CD4-positive, alpha-beta memory T cell (primary cell): ENCODE measurements at regions of chr16 and their contacts with region 1.

Region 1: DNA sequence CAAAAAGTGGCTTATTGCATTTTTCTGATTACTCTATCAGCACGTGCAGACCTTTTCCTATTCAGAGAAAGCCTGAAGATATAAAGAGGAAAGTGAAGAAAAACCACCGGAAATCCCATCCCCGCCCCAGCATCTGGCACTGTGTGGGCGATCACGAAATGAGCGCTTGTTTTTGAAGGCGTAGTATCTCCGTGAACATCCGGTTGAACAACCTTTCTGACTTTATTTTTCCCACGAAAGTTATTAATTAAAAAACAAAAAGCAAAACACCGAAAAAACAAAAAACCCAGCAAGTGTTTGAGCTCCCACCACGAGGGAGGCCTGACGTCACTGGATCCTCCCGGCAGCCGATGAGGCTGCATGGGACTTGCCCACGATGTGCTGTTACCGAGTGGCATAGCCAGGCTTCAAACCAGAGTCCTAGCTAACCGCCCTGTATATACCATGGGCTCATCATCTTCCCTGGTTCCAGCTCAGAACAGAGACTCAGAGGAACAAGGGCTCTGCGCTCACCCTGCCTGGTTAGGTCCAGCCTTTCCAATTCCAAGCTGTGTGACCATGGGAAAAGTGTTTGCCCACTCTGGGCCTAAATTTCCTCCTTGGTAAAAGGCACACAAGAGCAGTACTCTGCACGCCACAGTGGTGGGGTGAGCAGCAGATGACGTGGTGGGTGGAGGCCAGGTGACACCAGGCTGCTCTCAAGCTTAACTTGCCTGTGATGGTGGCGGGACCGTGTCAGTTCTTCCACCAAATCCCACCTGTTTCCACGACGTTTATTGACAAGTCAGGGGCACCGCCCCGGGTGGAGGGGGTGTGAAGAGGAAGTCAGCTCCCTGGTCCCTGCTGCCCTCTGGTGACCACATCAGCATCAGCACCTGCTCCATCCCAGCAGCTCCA is 34.3 kb upstream of the IL21R start:
- DNase-seq: peak; percentile 91 to 98 (median 93)
- H3K4me3 ChIP-seq: peak overlapping the region in 1 of 2 donors; percentile 36
- H3K4me3 Mint-ChIP-seq: peak overlapping the region in 7 of 8 donors; percentile 37 to 81 (median 70)
- H3K27ac ChIP-seq: peak overlapping the region; percentile 96
- H3K27ac Mint-ChIP-seq: peak overlapping the region; percentile 99 to 100 (median 99)
- H3K4me1 ChIP-seq: peaks cover 65% of the 10 kb centered on the region
- H3K4me1 Mint-ChIP-seq: peaks cover 32 to 65% (median 44%) of the 10 kb centered on the region in 4 donors
- H3K27me3 ChIP-seq: no peaks in the 10 kb centered on the region
- H3K27me3 Mint-ChIP-seq: no peaks in the 10 kb centered on the region

Region 2: GRCh38 chr16:26863931-26864330 is 503.8 kb before region 1 on chr16:
- CTCF ChIA-PET with region 1: no interaction called
- POLR2A ChIA-PET with region 1: no interaction called
- intact Hi-C with region 1: no loop called
- DNase-seq: no peak
- H3K4me3 ChIP-seq: no peak overlapping the region
- H3K4me3 Mint-ChIP-seq: no peak overlapping the region
- H3K27ac ChIP-seq: no peak overlapping the region
- H3K27ac Mint-ChIP-seq: no peak overlapping the region
- H3K4me1 ChIP-seq: no peaks in the 10 kb centered on the region
- H3K4me1 Mint-ChIP-seq: no peaks in the 10 kb centered on the region
- H3K27me3 ChIP-seq: no peaks in the 10 kb centered on the region
- H3K27me3 Mint-ChIP-seq: peaks cover 10 to 13% of the 10 kb centered on the region in 2 donors

Region 3: DNA sequence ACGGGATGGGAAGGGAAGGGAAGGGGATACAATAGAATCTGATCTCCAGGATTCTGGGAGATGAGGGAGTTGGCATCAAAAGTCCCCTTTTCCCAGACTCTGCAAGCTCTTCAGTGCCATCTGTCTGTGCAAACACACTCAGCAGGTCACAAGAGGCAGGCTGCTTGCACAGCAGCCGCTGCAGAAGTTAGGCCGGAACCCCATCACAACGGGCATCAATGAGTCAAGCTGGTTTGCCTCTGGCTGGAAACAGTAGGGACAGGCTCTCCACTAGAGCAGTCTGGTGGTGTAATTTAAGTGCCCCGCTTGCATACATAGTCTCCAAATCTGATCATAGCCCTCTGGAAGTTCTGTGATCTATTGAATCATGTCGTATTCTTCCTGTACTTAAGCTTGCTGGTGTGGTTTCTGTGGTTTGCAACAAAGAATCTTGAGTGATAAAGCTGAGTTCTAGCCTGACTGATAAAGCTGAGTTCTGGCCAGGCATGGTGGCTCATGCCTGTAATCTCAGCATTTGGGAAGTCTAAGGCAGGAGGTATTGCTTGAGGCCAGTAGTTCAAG is 198.1 kb before region 1 on chr16:
- CTCF ChIA-PET with region 1: interaction called, 63 read pairs
- POLR2A ChIA-PET with region 1: interaction called, 34 read pairs
- intact Hi-C with region 1: no loop called
- DNase-seq: peak; percentile 86 to 93 (median 87)
- H3K4me3 ChIP-seq: no peak overlapping the region
- H3K4me3 Mint-ChIP-seq: peak overlapping the region in 7 of 8 donors; percentile 35 to 77 (median 74)
- H3K27ac ChIP-seq: no peak overlapping the region
- H3K27ac Mint-ChIP-seq: peak overlapping the region; percentile 82 to 98 (median 96)
- H3K4me1 ChIP-seq: peaks cover 67% of the 10 kb centered on the region
- H3K4me1 Mint-ChIP-seq: peaks cover 46 to 74% (median 64%) of the 10 kb centered on the region in 4 donors
- H3K27me3 ChIP-seq: no peaks in the 10 kb centered on the region
- H3K27me3 Mint-ChIP-seq: no peaks in the 10 kb centered on the region

Region 4: GRCh38 chr16:27203429-27204231 is 164.1 kb before region 1 on chr16 and contains the start of gene KDM8:
- CTCF ChIA-PET with region 1: interaction called, 16 read pairs
- POLR2A ChIA-PET with region 1: interaction called, 23 read pairs
- intact Hi-C with region 1: loop called (anchors 1 kb)
- DNase-seq: peak; percentile 99 to 100 (median 100)
- H3K4me3 ChIP-seq: peak within 1 kb of the TSS; percentile 61 to 85
- H3K4me3 Mint-ChIP-seq: peak within 1 kb of the TSS; percentile 97 to 100 (median 99)
- H3K27ac ChIP-seq: peak within 1 kb of the TSS; percentile 97
- H3K27ac Mint-ChIP-seq: peak within 1 kb of the TSS; percentile 92 to 100 (median 100)
- H3K4me1 ChIP-seq: peaks cover 60% of the 10 kb centered on the region
- H3K4me1 Mint-ChIP-seq: peaks cover 40 to 62% (median 48%) of the 10 kb centered on the region in 4 donors
- H3K27me3 ChIP-seq: no peaks in the 10 kb centered on the region
- H3K27me3 Mint-ChIP-seq: no peaks in the 10 kb centered on the region
- total RNA-seq, gene KDM8: 28.6 to 31.0 TPM

Region 5: DNA sequence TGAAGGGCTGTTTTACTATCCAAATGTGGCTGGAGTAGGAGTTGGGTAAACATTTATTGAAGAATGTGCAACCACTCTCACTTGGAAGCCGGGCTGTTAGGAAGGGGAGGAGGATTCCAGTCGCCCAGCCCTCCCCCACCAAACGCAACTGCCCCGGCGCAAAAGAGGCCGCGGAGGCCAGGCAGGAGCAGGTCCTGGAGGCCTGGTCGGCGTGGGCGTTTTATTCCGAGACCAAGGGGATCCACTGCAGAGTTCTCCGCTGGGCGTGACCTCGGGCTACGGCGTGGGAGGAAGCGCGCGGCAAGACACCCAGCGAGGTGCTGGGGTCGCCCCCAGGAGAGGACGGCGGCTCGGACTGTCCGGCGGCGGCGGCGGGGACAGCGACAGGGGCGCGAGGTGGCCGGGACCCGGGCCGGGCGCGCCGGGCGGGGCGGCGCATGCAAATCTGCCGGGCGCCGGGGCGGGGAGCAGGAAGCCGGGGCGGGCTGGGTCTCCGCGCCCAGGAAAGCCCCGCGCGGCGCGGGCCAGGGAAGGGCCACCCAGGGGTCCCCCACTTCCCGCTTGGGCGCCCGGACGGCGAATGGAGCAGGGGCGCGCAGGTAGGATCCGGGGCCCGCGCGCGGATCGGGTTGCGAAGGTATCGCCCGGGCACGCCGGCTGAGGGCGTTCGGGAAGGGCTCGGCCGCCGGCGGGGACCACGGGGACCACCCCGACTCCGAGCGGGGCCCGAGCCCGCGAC is 54.1 kb before region 1 on chr16 and contains the start of gene IL4R:
- CTCF ChIA-PET with region 1: interaction called, 25 read pairs
- POLR2A ChIA-PET with region 1: interaction called, 43 read pairs
- intact Hi-C with region 1: loop called (anchors 1 kb)
- DNase-seq: peak; percentile 66 to 77 (median 69)
- H3K4me3 ChIP-seq: peak within 1 kb of the TSS; percentile 76 to 92
- H3K4me3 Mint-ChIP-seq: peak within 1 kb of the TSS; percentile 89 to 98 (median 94)
- H3K27ac ChIP-seq: peak within 1 kb of the TSS; percentile 96
- H3K27ac Mint-ChIP-seq: peak within 1 kb of the TSS; percentile 94 to 99 (median 99)
- H3K4me1 ChIP-seq: peaks cover 47% of the 10 kb centered on the region
- H3K4me1 Mint-ChIP-seq: peaks cover 30 to 53% (median 42%) of the 10 kb centered on the region in 4 donors
- H3K27me3 ChIP-seq: no peaks in the 10 kb centered on the region
- H3K27me3 Mint-ChIP-seq: no peaks in the 10 kb centered on the region
- total RNA-seq, gene IL4R: 143 to 152 TPM

Region 6: DNA sequence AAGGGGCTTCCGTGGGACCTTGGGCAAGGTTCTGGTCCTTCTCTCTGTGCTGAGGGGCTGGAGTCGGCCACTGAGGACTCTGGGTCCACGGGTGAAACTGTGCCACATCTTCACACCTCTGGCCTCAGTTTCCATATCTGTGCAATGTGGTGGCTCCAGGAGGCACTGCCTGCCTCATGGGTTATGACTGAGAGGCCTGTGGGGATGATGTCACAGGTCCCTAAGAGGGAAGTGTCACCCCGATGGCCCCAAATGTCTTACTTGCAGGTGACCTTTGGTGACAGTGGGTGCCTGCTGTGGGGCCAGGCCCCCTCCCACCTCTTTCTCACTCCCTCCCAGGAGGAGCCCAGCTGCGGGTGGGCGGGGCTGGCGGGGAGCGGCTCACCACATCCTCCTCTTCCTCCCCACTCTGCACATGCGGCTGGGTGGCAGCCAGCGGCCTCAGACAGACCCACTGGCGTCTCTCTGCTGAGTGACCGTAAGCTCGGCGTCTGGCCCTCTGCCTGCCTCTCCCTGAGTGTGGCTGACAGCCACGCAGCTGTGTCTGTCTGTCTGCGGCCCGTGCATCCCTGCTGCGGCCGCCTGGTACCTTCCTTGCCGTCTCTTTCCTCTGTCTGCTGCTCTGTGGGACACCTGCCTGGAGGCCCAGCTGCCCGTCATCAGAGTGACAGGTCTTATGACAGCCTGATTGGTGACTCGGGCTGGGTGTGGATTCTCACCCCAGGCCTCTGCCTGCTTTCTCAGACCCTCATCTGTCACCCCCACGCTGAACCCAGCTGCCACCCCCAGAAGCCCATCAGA is 34.3 kb after region 1 on chr16 and contains the start of gene IL21R:
- CTCF ChIA-PET with region 1: interaction called, 10 read pairs
- POLR2A ChIA-PET with region 1: interaction called, 118 read pairs
- intact Hi-C with region 1: loop called (anchors 2 kb)
- DNase-seq: peak; percentile 85 to 95 (median 88)
- H3K4me3 ChIP-seq: peak within 1 kb of the TSS; percentile 69 to 98
- H3K4me3 Mint-ChIP-seq: peak within 1 kb of the TSS; percentile 94 to 99 (median 98)
- H3K27ac ChIP-seq: peak within 1 kb of the TSS; percentile 83
- H3K27ac Mint-ChIP-seq: peak within 1 kb of the TSS; percentile 93 to 99 (median 96)
- H3K4me1 ChIP-seq: peaks cover 52% of the 10 kb centered on the region
- H3K4me1 Mint-ChIP-seq: peaks cover 34 to 79% (median 54%) of the 10 kb centered on the region in 4 donors
- H3K27me3 ChIP-seq: no peaks in the 10 kb centered on the region
- H3K27me3 Mint-ChIP-seq: no peaks in the 10 kb centered on the region
- total RNA-seq, gene IL21R: 28.3 to 29.1 TPM

Region 7: DNA sequence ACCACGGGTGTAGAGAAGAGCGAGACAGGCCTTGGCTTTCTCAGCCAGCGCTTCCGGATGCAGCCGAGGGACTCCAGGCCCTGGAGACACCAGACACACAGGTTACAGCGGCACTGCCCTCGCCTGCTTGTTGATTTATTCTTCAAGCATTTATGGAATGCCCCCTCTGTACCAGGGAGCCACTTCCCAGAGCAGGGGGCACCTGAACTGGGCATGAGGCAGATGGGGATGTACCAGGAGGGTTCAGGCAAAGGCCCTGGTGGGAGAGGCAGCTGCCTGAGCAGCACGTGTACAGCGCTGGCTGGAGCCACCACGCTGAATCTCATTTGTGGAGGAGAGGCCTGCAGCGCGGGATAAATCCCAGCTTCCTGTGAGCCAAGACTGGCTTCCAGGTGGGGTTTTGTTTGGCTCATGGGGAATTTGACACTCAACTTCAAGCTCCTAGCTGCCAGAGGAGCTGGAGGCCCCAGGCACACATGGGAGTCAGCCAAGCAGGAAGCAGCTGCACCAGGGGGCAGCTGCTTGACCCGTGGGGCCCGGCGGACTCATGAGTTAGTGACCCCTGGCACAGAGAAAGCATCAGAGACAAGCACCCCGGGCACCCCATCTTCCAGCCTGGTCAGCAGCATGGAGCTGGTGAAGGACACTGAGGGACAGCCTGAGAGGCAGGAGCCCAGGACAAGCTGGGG is 93.9 kb after region 1 on chr16:
- CTCF ChIA-PET with region 1: interaction called, 13 read pairs
- POLR2A ChIA-PET with region 1: interaction called, 15 read pairs
- intact Hi-C with region 1: loop called (anchors 2 kb)
- DNase-seq: no peak
- H3K4me3 ChIP-seq: no peak overlapping the region
- H3K4me3 Mint-ChIP-seq: peak overlapping the region in 1 of 8 donors; percentile 57
- H3K27ac ChIP-seq: no peak overlapping the region
- H3K27ac Mint-ChIP-seq: peak overlapping the region in 5 of 7 donors; percentile 12 to 81 (median 77)
- H3K4me1 ChIP-seq: peaks cover 61% of the 10 kb centered on the region
- H3K4me1 Mint-ChIP-seq: peaks cover 34 to 67% (median 50%) of the 10 kb centered on the region in 4 donors
- H3K27me3 ChIP-seq: no peaks in the 10 kb centered on the region
- H3K27me3 Mint-ChIP-seq: no peaks in the 10 kb centered on the region

Region 8: GRCh38 chr16:28067604-28068379 is 700.1 kb after region 1 on chr16:
- CTCF ChIA-PET with region 1: no interaction called
- POLR2A ChIA-PET with region 1: no interaction called
- intact Hi-C with region 1: no loop called
- DNase-seq: no peak
- H3K4me3 ChIP-seq: no peak overlapping the region
- H3K4me3 Mint-ChIP-seq: no peak overlapping the region
- H3K27ac ChIP-seq: no peak overlapping the region
- H3K27ac Mint-ChIP-seq: no peak overlapping the region
- H3K4me1 ChIP-seq: no peaks in the 10 kb centered on the region
- H3K4me1 Mint-ChIP-seq: peaks cover 0 to 2% (median under 1%) of the 10 kb centered on the region in 4 donors
- H3K27me3 ChIP-seq: peaks cover 8% of the 10 kb centered on the region
- H3K27me3 Mint-ChIP-seq: peaks cover 10% of the 10 kb centered on the region in 2 donors